ENCODE measurements at regions of chr1 and their contacts with region 1.

Region 1: GRCh38 chr1:192477630-192478029 is 97.9 kb upstream of the RGS1 start:
- DNase-seq: no peak

Region 2: GRCh38 chr1:192303029-192303428 is 174.6 kb before region 1 on chr1:
- intact Hi-C with region 1: no loop called
- DNase-seq: no peak

Region 3: DNA sequence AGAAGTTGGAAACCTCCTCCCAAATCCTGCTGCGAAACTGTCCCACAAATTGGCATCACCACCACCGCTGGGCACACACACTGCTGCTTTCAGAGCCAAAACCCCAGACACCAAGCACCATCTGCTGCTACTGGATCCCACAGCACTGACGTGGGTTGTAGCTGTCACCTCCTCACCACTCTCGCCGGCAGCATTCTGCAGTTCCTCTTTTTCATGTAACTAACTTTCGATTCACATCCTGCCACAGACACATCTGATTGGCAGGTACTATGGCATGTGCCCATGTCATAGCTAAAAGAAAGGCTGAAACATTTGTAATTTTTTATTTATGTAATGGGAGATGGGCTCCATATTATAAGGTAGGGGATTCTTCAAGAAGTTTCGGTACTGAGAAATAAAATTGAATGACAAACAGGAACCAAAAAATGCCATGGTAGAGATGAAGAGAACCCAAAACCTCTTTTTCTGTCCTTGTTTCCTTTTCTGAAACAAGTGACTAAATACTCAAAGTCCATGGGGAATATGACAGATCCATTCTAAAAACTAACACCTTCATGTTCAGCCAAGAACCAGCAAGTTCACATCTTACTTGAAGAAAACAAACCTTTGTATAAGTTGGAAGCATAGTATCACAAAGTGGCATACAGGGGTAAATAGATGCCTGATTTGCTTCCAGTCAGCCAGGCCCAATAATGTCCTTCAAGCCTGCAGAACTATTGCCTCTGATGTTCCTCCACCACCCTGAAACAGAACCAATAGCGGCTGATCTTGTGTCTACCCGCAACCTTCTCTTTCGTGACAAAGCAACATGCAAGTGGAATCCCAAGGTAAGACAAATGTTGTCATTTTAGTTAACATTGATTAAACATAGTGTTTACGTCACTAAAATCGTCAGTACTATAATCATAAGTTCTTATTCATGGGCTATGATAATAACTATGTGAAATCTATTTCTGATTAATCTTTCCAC is 131.8 kb after region 1 on chr1:
- intact Hi-C with region 1: loop called (anchors 10 kb)
- DNase-seq: peak in 40 of 42 donors; percentile 2 to 64 (median 24)

Region 4: GRCh38 chr1:193019442-193020026 is 541.9 kb after region 1 on chr1:
- intact Hi-C with region 1: loop called (anchors 10 kb)
- DNase-seq: peak in 4 of 42 donors; percentile 9 to 26 (median 14)